PC-3 (cell line): ENCODE measurements at regions of chr2 and their contacts with region 1.

Region 1: GRCh38 chr2:191811807-191812602 is 34.9 kb downstream of the CAVIN2 start:
- DNase-seq: peak; percentile 85
- ATAC-seq: peak; percentile 93
- H3K4me3 ChIP-seq: no peak overlapping the region
- H3K27ac ChIP-seq: no peak overlapping the region
- H3K4me1 ChIP-seq: no peaks in the 10 kb centered on the region
- H3K27me3 ChIP-seq: no peaks in the 10 kb centered on the region
- CTCF ChIP-seq: peak; percentile 91

Region 2: GRCh38 chr2:191274413-191274815 is 537.6 kb before region 1 on chr2:
- CTCF ChIA-PET with region 1: no interaction called
- POLR2A ChIA-PET with region 1: no interaction called
- intact Hi-C with region 1: no loop called
- DNase-seq: no peak
- ATAC-seq: no peak
- H3K4me3 ChIP-seq: no peak overlapping the region
- H3K27ac ChIP-seq: no peak overlapping the region
- H3K4me1 ChIP-seq: no peaks in the 10 kb centered on the region
- H3K27me3 ChIP-seq: no peaks in the 10 kb centered on the region
- CTCF ChIP-seq: no peak

Region 3: GRCh38 chr2:192162392-192163042 is 350.5 kb after region 1 on chr2:
- CTCF ChIA-PET with region 1: interaction called, 73 read pairs
- POLR2A ChIA-PET with region 1: interaction called, 3 read pairs
- intact Hi-C with region 1: loop called (anchors 1 kb)
- DNase-seq: peak; percentile 87
- ATAC-seq: peak; percentile 92
- H3K4me3 ChIP-seq: no peak overlapping the region
- H3K27ac ChIP-seq: no peak overlapping the region
- H3K4me1 ChIP-seq: peaks cover 5% of the 10 kb centered on the region; the same call in 1 of the 2 replicates
- H3K27me3 ChIP-seq: 0 out of 2 replicates have a peak, but pooled peaks cover 1% of the 10 kb centered on the region
- CTCF ChIP-seq: peak; percentile 97

Region 4: DNA sequence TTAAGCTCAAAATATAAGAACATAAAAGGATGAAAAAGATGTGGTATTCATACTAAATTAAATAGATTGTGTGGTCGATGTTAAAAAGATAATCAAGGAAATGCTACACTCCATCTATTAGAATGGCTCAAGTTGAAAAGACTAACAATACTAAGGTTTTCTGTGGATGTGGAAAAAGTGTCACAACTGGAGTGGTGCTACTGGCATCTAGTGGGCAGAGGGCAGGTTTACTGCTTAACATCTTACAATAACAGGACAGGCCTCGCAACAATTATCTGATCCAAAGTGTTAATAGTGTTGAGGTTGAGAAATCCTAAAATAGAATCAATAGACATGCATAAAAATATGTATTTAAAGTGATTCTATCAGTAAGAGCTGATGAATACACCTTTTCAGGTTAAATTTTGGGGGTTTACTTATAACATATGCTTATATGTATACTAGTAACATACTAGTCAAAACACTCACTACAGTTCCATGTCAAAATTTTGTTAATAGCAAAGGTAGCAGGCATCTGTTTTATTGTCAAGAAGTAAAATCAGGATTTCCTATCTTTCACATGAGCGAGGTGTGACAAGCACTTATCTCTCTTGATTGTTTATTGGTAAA is 474.2 kb after region 1 on chr2:
- CTCF ChIA-PET with region 1: no interaction called
- POLR2A ChIA-PET with region 1: no interaction called
- intact Hi-C with region 1: loop called (anchors 1 kb)
- DNase-seq: peak; percentile 66
- ATAC-seq: peak; percentile 81
- H3K4me3 ChIP-seq: no peak overlapping the region
- H3K27ac ChIP-seq: no peak overlapping the region
- H3K4me1 ChIP-seq: no peaks in the 10 kb centered on the region
- H3K27me3 ChIP-seq: 0 out of 2 replicates have a peak, but pooled peaks cover 3% of the 10 kb centered on the region
- CTCF ChIP-seq: peak; percentile 77